ENCODE measurements at regions of chr1 and their contacts with region 1.

Region 1: DNA sequence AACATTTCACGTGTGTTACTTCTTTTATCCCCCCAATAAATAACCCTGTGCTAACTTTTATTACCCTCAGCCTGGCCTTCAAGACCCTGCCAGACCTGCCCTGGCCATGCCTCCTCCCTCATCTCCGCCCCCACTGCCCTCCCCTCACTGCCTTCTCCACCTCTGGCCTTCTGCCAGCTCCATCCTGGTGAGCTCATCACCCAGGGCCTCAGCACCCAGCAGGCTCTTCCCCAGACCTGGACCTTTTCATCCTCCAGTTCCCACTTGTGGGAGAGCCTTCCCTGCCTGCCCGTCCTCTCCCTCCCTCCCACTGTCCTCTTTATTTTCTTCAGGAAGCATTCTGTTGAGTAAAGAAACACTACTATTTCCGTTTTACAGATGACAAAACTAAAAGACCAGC is 72.0 kb downstream of the SLC66A1 start:
- DNase-seq: peak; percentile 43 to 70 (median 53)
- H3K4me3 ChIP-seq: no peak overlapping the region
- H3K27ac ChIP-seq: peak overlapping the region in 1 of 5 donors; percentile 8
- H3K4me1 ChIP-seq: peaks cover 0 to 18% of the 10 kb centered on the region in 2 donors
- H3K27me3 ChIP-seq: no peaks in the 10 kb centered on the region
- CTCF ChIP-seq: no peak
- POLR2A ChIP-seq: no peak

Region 2: DNA sequence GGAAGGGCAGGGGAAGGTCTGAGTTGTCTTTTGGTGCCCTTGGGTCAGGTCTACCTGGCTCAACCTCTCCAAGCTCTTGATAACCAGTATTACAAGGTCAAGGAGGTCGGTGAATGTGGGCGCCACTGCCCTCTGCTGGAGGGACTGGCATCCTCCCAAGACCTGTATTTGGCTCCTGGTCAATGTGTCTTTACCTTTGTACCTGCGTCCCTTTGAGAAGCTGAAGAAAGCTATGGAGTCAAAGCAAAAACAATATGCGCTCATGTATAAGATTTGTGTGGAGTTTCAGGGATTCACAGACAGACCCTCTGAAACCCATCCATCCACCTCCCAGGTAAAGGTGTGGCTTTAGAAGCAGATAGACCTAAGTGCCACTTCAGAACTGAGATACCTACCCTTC is 198.2 kb after region 1 on chr1:
- intact Hi-C with region 1: loop called in 1 of 2 experiments (anchors 10 kb)
- DNase-seq: peak; percentile 17 to 76 (median 42)
- H3K4me3 ChIP-seq: no peak overlapping the region
- H3K27ac ChIP-seq: no peak overlapping the region
- H3K4me1 ChIP-seq: no peaks in the 10 kb centered on the region
- H3K27me3 ChIP-seq: no peaks in the 10 kb centered on the region
- CTCF ChIP-seq: peak; percentile 18 to 65 (median 58)
- POLR2A ChIP-seq: no peak

Measured in adrenal gland (tissue), 19 donors.